ENCODE measurements at regions of chr22 and their contacts with region 1.

Region 1: GRCh38 chr22:42868751-42869251 is 11.7 kb upstream of the ARFGAP3 start:
- DNase-seq: no peak
- ATAC-seq: no peak
- H3K4me3 ChIP-seq: no peak overlapping the region
- H3K4me3 Mint-ChIP-seq: no peak overlapping the region
- H3K27ac ChIP-seq: no peak overlapping the region
- H3K27ac Mint-ChIP-seq: no peak overlapping the region
- H3K4me1 ChIP-seq: peaks cover 0 to 8% of the 10 kb centered on the region in 2 donors
- H3K4me1 Mint-ChIP-seq: peaks cover 9% of the 10 kb centered on the region
- H3K27me3 ChIP-seq: no peaks in the 10 kb centered on the region
- H3K27me3 Mint-ChIP-seq: no peaks in the 10 kb centered on the region
- CTCF ChIP-seq: no peak

Region 2: GRCh38 chr22:42717197-42717928 is 151.4 kb before region 1 on chr22:
- CTCF ChIA-PET with region 1: no interaction called
- POLR2A ChIA-PET with region 1: interaction called, 10 read pairs
- intact Hi-C with region 1: no loop called
- DNase-seq: no peak
- ATAC-seq: peak; percentile 23
- H3K4me3 ChIP-seq: no peak overlapping the region
- H3K4me3 Mint-ChIP-seq: peak overlapping the region; percentile 28
- H3K27ac ChIP-seq: no peak overlapping the region
- H3K27ac Mint-ChIP-seq: peak overlapping the region; percentile 51
- H3K4me1 ChIP-seq: peaks cover 37 to 39% of the 10 kb centered on the region in 2 donors
- H3K4me1 Mint-ChIP-seq: peaks cover 48% of the 10 kb centered on the region
- H3K27me3 ChIP-seq: peaks cover 0 to 26% (median 10%) of the 10 kb centered on the region in 4 experiments
- H3K27me3 Mint-ChIP-seq: peaks cover 19% of the 10 kb centered on the region
- CTCF ChIP-seq: no peak

Region 3: DNA sequence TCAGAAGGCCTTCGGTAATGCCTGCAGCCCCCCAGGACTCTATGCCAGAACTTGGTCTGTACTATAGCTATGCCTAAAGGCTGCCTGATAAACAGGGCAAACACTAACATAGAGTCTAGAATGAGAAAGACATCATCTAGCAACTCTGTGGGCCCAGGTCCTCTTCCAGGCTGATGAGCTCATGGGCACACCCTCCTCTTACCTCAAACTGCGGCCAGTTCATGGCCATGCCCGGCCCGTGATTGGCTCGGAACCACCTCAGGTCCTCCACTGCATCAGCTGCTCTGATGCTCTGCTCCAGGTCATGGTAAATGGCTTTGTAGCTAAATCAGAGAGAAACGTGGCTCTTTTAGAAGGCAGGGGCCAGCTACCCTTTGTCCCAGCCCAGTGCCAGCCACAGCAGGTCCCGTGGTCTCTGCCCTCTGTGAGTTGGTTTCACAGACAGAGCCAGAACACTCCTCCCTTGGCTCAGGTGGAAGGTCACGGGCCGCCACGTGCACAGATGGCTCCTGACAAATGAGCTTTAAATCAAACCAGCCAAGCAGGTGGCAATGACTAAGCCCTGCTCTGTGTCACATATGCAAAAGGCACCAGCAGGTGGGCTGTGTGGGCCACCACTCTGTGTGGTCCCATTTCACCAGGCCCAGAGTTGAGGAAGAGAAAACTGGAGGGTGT is 13.3 kb after region 1 on chr22:
- CTCF ChIA-PET with region 1: interaction called, 16 read pairs
- POLR2A ChIA-PET with region 1: no interaction called
- intact Hi-C with region 1: no loop called
- DNase-seq: peak; percentile 41
- ATAC-seq: peak; percentile 64
- H3K4me3 ChIP-seq: no peak overlapping the region
- H3K4me3 Mint-ChIP-seq: no peak overlapping the region
- H3K27ac ChIP-seq: no peak overlapping the region
- H3K27ac Mint-ChIP-seq: peak overlapping the region; percentile 79
- H3K4me1 ChIP-seq: peaks cover 0 to 9% of the 10 kb centered on the region in 2 donors
- H3K4me1 Mint-ChIP-seq: peaks cover 10% of the 10 kb centered on the region
- H3K27me3 ChIP-seq: no peaks in the 10 kb centered on the region
- H3K27me3 Mint-ChIP-seq: no peaks in the 10 kb centered on the region
- CTCF ChIP-seq: no peak

Region 4: DNA sequence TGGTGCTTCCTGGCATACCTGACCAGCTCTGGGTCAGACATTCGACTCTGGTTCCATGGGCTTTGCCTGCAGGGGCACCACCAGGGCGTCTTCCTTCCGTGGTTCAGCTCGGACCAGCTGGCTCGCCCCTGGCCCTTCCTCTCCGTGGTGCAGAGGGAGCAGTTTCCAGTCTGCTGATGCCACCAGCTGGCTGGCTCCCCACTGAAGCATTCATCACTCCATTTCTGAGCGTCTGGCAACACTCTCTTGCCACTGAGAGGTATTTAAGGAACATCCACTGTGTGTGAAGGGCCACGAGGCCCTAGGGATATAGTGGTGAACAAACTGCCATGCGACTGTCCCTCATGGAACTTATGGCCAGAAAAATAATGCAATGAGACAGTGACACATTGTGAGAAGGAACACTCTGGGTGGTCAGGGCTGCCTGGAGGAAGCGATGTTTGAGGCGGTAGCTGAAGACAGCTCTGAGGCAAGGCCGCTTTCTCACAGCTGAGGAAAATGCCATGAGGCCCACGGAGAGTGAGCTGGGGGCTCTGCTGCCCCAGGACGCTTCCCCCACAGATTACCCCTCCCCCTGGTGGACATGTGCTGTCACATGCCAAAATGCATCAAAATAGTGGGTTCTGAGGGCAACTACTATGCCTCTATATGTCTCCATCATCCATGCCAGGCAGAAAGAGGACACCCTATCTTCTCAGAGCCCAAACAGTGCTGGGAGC is 33.1 kb after region 1 on chr22:
- CTCF ChIA-PET with region 1: interaction called, 13 read pairs
- POLR2A ChIA-PET with region 1: interaction called, 7 read pairs
- intact Hi-C with region 1: no loop called
- DNase-seq: peak; percentile 30
- ATAC-seq: no peak
- H3K4me3 ChIP-seq: no peak overlapping the region
- H3K4me3 Mint-ChIP-seq: no peak overlapping the region
- H3K27ac ChIP-seq: no peak overlapping the region
- H3K27ac Mint-ChIP-seq: peak overlapping the region; percentile 10
- H3K4me1 ChIP-seq: peaks cover 0 to 5% of the 10 kb centered on the region in 2 donors
- H3K4me1 Mint-ChIP-seq: peaks cover 8% of the 10 kb centered on the region
- H3K27me3 ChIP-seq: no peaks in the 10 kb centered on the region
- H3K27me3 Mint-ChIP-seq: no peaks in the 10 kb centered on the region
- CTCF ChIP-seq: peak; percentile 48

Region 5: GRCh38 chr22:42967933-42968332 is 99.1 kb after region 1 on chr22:
- CTCF ChIA-PET with region 1: interaction called, 35 read pairs
- POLR2A ChIA-PET with region 1: interaction called, 6 read pairs
- intact Hi-C with region 1: loop called (anchors 2 kb)
- DNase-seq: peak; percentile 77
- ATAC-seq: peak; percentile 63
- H3K4me3 ChIP-seq: no peak overlapping the region
- H3K4me3 Mint-ChIP-seq: no peak overlapping the region
- H3K27ac ChIP-seq: no peak overlapping the region
- H3K27ac Mint-ChIP-seq: peak overlapping the region; percentile 46
- H3K4me1 ChIP-seq: peaks cover 7 to 16% of the 10 kb centered on the region in 2 donors
- H3K4me1 Mint-ChIP-seq: peaks cover 48% of the 10 kb centered on the region
- H3K27me3 ChIP-seq: no peaks in the 10 kb centered on the region
- H3K27me3 Mint-ChIP-seq: no peaks in the 10 kb centered on the region
- CTCF ChIP-seq: peak; percentile 46

Region 6: DNA sequence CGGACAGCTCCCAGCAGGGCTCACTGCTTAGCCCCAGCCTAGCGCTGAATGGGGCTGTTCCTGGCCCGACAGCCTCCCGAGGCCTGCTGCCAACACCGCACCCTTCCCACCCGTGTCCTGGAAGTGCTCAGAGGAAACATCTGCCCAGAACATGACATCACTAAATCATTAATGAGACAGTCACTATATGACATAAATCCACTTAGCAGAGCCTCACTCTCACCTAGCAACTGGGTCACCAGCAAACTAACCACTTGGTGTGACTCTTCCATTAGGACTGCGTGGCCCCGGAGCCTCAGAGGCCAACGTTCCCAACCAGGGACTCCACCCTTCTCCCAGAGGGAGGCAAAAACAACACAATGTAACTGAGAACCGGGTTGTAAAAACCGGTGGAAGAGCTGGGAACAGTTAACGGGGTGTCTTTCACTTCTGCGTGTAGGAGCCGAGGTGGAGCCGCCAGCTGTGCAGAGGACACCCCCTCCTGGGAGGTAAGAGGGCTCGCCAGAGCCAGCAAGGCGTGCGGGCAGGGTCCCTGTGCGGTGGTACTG is 167.6 kb after region 1 on chr22:
- CTCF ChIA-PET with region 1: interaction called, 35 read pairs
- POLR2A ChIA-PET with region 1: no interaction called
- intact Hi-C with region 1: loop called (anchors 1 kb)
- DNase-seq: no peak
- ATAC-seq: no peak
- H3K4me3 ChIP-seq: no peak overlapping the region
- H3K4me3 Mint-ChIP-seq: no peak overlapping the region
- H3K27ac ChIP-seq: no peak overlapping the region
- H3K27ac Mint-ChIP-seq: no peak overlapping the region
- H3K4me1 ChIP-seq: peaks cover 0 to 6% of the 10 kb centered on the region in 2 donors
- H3K4me1 Mint-ChIP-seq: peaks cover 5% of the 10 kb centered on the region
- H3K27me3 ChIP-seq: no peaks in the 10 kb centered on the region
- H3K27me3 Mint-ChIP-seq: no peaks in the 10 kb centered on the region
- CTCF ChIP-seq: no peak

Region 7: GRCh38 chr22:43168416-43169309 is 299.9 kb after region 1 on chr22:
- CTCF ChIA-PET with region 1: no interaction called
- POLR2A ChIA-PET with region 1: no interaction called
- intact Hi-C with region 1: no loop called
- DNase-seq: no peak
- ATAC-seq: no peak
- H3K4me3 ChIP-seq: no peak overlapping the region
- H3K4me3 Mint-ChIP-seq: no peak overlapping the region
- H3K27ac ChIP-seq: no peak overlapping the region
- H3K27ac Mint-ChIP-seq: no peak overlapping the region
- H3K4me1 ChIP-seq: peaks cover 0 to 7% of the 10 kb centered on the region in 2 donors
- H3K4me1 Mint-ChIP-seq: peaks cover 9% of the 10 kb centered on the region
- H3K27me3 ChIP-seq: no peaks in the 10 kb centered on the region
- H3K27me3 Mint-ChIP-seq: no peaks in the 10 kb centered on the region
- CTCF ChIP-seq: no peak

Measured in B cell (primary cell).